H1 (cell line): ENCODE measurements at regions of chr15 and their contacts with region 1.

Region 1: DNA sequence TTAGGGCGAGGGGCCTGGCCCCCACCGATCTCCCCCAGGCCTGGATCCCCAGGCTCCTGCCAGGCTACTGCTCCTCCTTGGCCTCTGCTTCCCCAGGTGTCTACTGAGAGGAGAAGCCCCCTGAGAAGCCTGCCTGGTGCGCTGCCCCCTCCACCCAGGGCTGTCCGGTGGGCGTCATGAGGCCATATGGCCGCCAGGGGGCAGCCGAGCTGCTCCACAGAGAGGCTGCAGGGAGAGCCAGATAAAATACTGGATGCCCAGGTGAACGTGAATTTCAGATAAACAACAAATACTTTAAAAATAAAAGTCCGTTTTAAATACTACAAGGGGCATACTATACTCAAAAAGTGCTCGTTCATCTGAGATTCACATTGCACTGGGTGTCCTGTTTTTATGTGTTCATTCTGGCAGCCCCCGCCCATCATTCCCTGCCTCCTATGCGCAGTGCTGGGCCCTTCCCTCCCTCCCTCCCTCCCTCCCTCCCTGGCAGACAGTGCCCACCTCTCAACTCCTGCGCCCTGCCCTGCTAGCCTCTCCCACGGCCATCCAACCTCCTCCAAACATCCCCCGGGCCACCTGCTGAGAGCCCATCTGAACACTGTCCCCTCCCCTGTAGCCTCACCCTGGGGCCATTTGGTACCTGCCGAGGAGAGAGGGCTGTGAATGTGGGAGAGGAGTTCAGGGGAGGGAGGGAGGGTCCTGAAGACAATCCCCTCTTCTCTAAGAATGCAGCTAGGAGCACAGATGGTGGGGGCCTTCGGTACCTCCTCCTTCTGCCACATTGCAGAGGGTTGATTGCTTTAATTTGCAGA is 29.6 kb downstream of the PSTPIP1 start:
- DNase-seq: peak in 1 of 2 experiments; percentile 96
- H3K4me3 ChIP-seq: peak overlapping the region in 1 of 4 experiments; percentile 34; a peak in 1 of 8 replicates
- H3K27ac ChIP-seq: no peak overlapping the region
- H3K4me1 ChIP-seq: peaks cover 0 to 13% (median 2%) of the 10 kb centered on the region in 4 experiments; a peak in 5 of 7 replicates
- H3K27me3 ChIP-seq: peaks cover 0 to 7% (median 0%) of the 10 kb centered on the region in 4 experiments; a peak in 3 of 7 replicates
- CTCF ChIP-seq: peak in 2 of 3 experiments; percentile 85 to 87; a peak in 3 of 4 replicates
- EP300 ChIP-seq: no peak
- POLR2A ChIP-seq: no peak
- RAD21 ChIP-seq: peak; percentile 80 to 89

Region 2: GRCh38 chr15:76871930-76872329 is 152.5 kb before region 1 on chr15:
- CTCF ChIA-PET with region 1: no interaction called
- POLR2A ChIA-PET with region 1: no interaction called
- DNase-seq: no peak
- H3K4me3 ChIP-seq: no peak overlapping the region
- H3K27ac ChIP-seq: no peak overlapping the region
- H3K4me1 ChIP-seq: no peaks in the 10 kb centered on the region
- H3K27me3 ChIP-seq: no peaks in the 10 kb centered on the region
- CTCF ChIP-seq: no peak
- EP300 ChIP-seq: no peak
- POLR2A ChIP-seq: no peak
- RAD21 ChIP-seq: no peak

Region 3: GRCh38 chr15:76973362-76973743 is 51.1 kb before region 1 on chr15:
- CTCF ChIA-PET with region 1: interaction called, 34 read pairs
- POLR2A ChIA-PET with region 1: no interaction called
- DNase-seq: peak; percentile 54 to 85
- H3K4me3 ChIP-seq: no peak overlapping the region; a peak in 1 of 8 replicates
- H3K27ac ChIP-seq: no peak overlapping the region
- H3K4me1 ChIP-seq: peaks cover 0 to 2% (median 0%) of the 10 kb centered on the region in 4 experiments; a peak in 3 of 7 replicates
- H3K27me3 ChIP-seq: no peaks in the 10 kb centered on the region; a peak in 1 of 7 replicates
- CTCF ChIP-seq: peak; percentile 83 to 87 (median 87)
- EP300 ChIP-seq: peak in 1 of 2 experiments; percentile 69; a peak in 1 of 3 replicates
- POLR2A ChIP-seq: no peak
- RAD21 ChIP-seq: peak; percentile 89 to 91

Region 4: GRCh38 chr15:77002954-77003912 is 21.2 kb before region 1 on chr15:
- CTCF ChIA-PET with region 1: interaction called, 18 read pairs
- POLR2A ChIA-PET with region 1: interaction called, 3 read pairs
- DNase-seq: no peak
- H3K4me3 ChIP-seq: no peak overlapping the region
- H3K27ac ChIP-seq: no peak overlapping the region
- H3K4me1 ChIP-seq: no peaks in the 10 kb centered on the region
- H3K27me3 ChIP-seq: peaks cover 0 to 3% (median 0%) of the 10 kb centered on the region in 4 experiments; a peak in 2 of 7 replicates
- CTCF ChIP-seq: no peak
- EP300 ChIP-seq: no peak
- POLR2A ChIP-seq: no peak
- RAD21 ChIP-seq: no peak

Region 5: GRCh38 chr15:77034695-77035489 is 10.4 kb after region 1 on chr15:
- CTCF ChIA-PET with region 1: interaction called, 77 read pairs
- POLR2A ChIA-PET with region 1: interaction called, 3 read pairs
- DNase-seq: peak in 1 of 2 experiments; percentile 91
- H3K4me3 ChIP-seq: no peak overlapping the region
- H3K27ac ChIP-seq: no peak overlapping the region
- H3K4me1 ChIP-seq: peaks cover 0 to 21% (median 13%) of the 10 kb centered on the region in 4 experiments; a peak in 5 of 7 replicates
- H3K27me3 ChIP-seq: no peaks in the 10 kb centered on the region; a peak in 1 of 7 replicates
- CTCF ChIP-seq: peak in 2 of 3 experiments; percentile 81 to 84; a peak in 3 of 4 replicates
- EP300 ChIP-seq: no peak
- POLR2A ChIP-seq: no peak
- RAD21 ChIP-seq: peak; percentile 52 to 67

Region 6: DNA sequence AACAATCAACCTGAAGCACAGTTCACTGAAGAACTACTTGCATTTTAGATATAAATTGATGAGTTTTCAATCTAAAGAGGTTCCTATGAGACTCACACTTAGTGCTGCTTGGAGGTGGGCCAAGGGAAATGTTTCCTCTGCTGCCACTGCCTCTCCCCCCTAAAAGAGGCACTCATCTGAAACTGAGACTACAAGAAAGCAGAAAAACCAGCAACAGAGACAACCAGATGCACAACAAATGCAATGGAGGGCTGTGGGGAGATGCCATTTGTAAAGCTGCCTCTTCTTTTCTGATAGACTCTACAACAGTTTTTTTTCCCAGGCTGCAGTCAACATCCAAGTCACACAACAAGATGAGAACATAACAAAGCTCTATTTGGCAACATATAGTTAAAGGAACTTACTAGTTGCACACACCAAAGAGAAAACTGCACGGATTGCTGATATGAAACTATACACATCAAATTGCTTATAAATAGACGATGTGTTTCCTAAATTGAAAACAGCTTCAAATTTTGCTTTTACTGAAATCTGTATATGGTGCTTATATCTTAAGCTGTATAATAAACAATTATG is 35.4 kb after region 1 on chr15:
- CTCF ChIA-PET with region 1: interaction called, 11 read pairs
- POLR2A ChIA-PET with region 1: no interaction called
- DNase-seq: no peak
- H3K4me3 ChIP-seq: no peak overlapping the region
- H3K27ac ChIP-seq: no peak overlapping the region
- H3K4me1 ChIP-seq: peaks cover 0 to 8% (median 6%) of the 10 kb centered on the region in 4 experiments; a peak in 3 of 7 replicates
- H3K27me3 ChIP-seq: no peaks in the 10 kb centered on the region
- CTCF ChIP-seq: no peak
- EP300 ChIP-seq: no peak
- POLR2A ChIP-seq: no peak
- RAD21 ChIP-seq: no peak